AG04450 (cell line): ENCODE measurements at regions of chr17 and their contacts with region 1.

Region 1: GRCh38 chr17:75749545-75750389 is 15.2 kb downstream of the GALK1 start:
- DNase-seq: no peak
- H3K4me3 ChIP-seq: 0 out of 2 replicates have a peak overlapping the region, but pooled peaks have one; percentile 10
- H3K27ac ChIP-seq: no peak overlapping the region
- H3K27me3 ChIP-seq: peaks cover 3% of the 10 kb centered on the region
- CTCF ChIP-seq: peak; percentile 87

Region 2: GRCh38 chr17:75524953-75525719 is 224.6 kb before region 1 on chr17 and contains the start of gene LLGL2:
- CTCF ChIA-PET with region 1: interaction called, 10 read pairs
- POLR2A ChIA-PET with region 1: no interaction called
- DNase-seq: no peak
- H3K4me3 ChIP-seq: peak within 1 kb of the TSS; percentile 49
- H3K27ac ChIP-seq: no peak within 1 kb of the TSS
- H3K27me3 ChIP-seq: peaks cover 16% of the 10 kb centered on the region
- CTCF ChIP-seq: 0 out of 2 replicates have a peak, but pooled peaks have one; percentile 16
- polyA plus RNA-seq, gene LLGL2: 0.19 and 0.24 TPM in 2 replicates

Region 3: DNA sequence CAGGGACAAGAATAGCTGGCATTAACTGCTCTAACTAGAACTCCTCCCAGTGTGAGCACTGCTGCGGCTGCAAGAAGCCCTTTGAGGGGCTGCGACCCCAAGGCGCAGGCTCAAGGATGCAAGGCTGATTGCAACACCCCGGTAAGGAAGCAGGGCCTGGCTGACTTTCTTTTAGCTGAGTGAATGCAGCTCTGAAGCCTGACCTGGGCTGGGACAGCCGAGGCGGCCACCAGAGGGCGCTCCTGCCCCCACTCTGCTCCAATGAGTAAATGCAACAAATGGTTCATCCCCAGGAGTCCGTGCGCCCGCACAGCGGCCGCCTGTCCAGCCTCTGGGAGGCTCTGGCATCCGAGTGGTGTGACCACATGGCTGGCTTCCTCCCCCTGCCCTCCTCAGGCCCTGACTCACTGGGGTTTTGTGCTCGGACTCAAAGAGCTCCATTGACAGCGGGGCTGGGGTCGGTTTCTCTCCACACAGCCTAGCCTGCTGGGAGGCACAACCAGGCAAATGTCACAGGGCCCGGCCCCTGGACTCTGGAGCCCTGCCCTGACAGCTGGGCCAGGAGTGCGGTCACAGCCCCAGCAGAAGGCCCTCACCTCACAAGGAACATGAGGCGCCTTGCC is 116.8 kb before region 1 on chr17 and contains the start of gene SMIM5:
- CTCF ChIA-PET with region 1: interaction called, 309 read pairs
- POLR2A ChIA-PET with region 1: interaction called, 13 read pairs
- DNase-seq: peak; percentile 62
- H3K4me3 ChIP-seq: no peak within 1 kb of the TSS
- H3K27ac ChIP-seq: peak within 1 kb of the TSS; percentile 70
- H3K27me3 ChIP-seq: no peaks in the 10 kb centered on the region
- CTCF ChIP-seq: peak; percentile 93
- polyA plus RNA-seq, gene SMIM5: not detected in 2 replicates

Region 4: GRCh38 chr17:75667021-75667790 is 82.6 kb before region 1 on chr17 and contains the starts of genes RECQL5 and SAP30BP:
- CTCF ChIA-PET with region 1: interaction called, 214 read pairs
- POLR2A ChIA-PET with region 1: no interaction called
- DNase-seq: peak; percentile 98
- H3K4me3 ChIP-seq: peak within 1 kb of the TSS; percentile 100
- H3K27ac ChIP-seq: peak within 1 kb of the TSS; percentile 77
- H3K27me3 ChIP-seq: no peaks in the 10 kb centered on the region
- CTCF ChIP-seq: no peak
- polyA plus RNA-seq, gene RECQL5: 9.3 and 11.9 TPM in 2 replicates
- polyA plus RNA-seq, gene SAP30BP: 74.2 and 75.4 TPM in 2 replicates

Region 5: GRCh38 chr17:75688209-75688825 is 61.5 kb before region 1 on chr17:
- CTCF ChIA-PET with region 1: interaction called, 85 read pairs
- POLR2A ChIA-PET with region 1: interaction called, 4 read pairs
- DNase-seq: no peak
- H3K4me3 ChIP-seq: no peak overlapping the region
- H3K27ac ChIP-seq: no peak overlapping the region
- H3K27me3 ChIP-seq: no peaks in the 10 kb centered on the region
- CTCF ChIP-seq: no peak

Region 6: GRCh38 chr17:75764711-75765421 is 15.1 kb after region 1 on chr17 and contains the start of gene GALK1:
- CTCF ChIA-PET with region 1: interaction called, 38 read pairs
- POLR2A ChIA-PET with region 1: interaction called, 12 read pairs
- DNase-seq: no peak
- H3K4me3 ChIP-seq: peak within 1 kb of the TSS; percentile 70
- H3K27ac ChIP-seq: peak within 1 kb of the TSS; percentile 31
- H3K27me3 ChIP-seq: peaks cover 4% of the 10 kb centered on the region
- CTCF ChIP-seq: peak; percentile 65
- polyA plus RNA-seq, gene GALK1: 12.4 and 16.8 TPM in 2 replicates